Gastrocnemius medialis (tissue), 4 donors: ENCODE measurements at regions of chr18 and their contacts with region 1.

Region 1: GRCh38 chr18:9951022-9951859 is 37.4 kb downstream of the VAPA start:
- DNase-seq: no peak
- ATAC-seq: peak; percentile 43 to 71
- H3K4me3 ChIP-seq: no peak overlapping the region
- H3K27ac ChIP-seq: no peak overlapping the region
- H3K4me1 ChIP-seq: no peaks in the 10 kb centered on the region
- H3K27me3 ChIP-seq: no peaks in the 10 kb centered on the region
- CTCF ChIP-seq: peak in 4 of 5 experiments; percentile 27 to 55 (median 48)
- POLR2A ChIP-seq: no peak

Region 2: GRCh38 chr18:9708057-9708433 is 243.2 kb before region 1 on chr18 and contains the start of gene RAB31:
- in situ Hi-C with region 1: no loop called
- intact Hi-C with region 1: loop called (anchors 10 kb)
- DNase-seq: peak in 1 of 2 donors; percentile 54
- ATAC-seq: peak; percentile 69 to 72
- H3K4me3 ChIP-seq: peak within 1 kb of the TSS; percentile 64 to 85 (median 71)
- H3K27ac ChIP-seq: peak within 1 kb of the TSS; percentile 63 to 85 (median 72)
- H3K4me1 ChIP-seq: peaks cover 8 to 9% of the 10 kb centered on the region in 2 donors
- H3K27me3 ChIP-seq: peaks cover 18 to 21% (median 18%) of the 10 kb centered on the region in 3 donors
- CTCF ChIP-seq: no peak
- POLR2A ChIP-seq: peak; percentile 44 to 58
- total RNA-seq, gene RAB31: 3.2 to 7.1 (median 4.4) TPM

Region 3: GRCh38 chr18:9814431-9814830 is 136.8 kb before region 1 on chr18:
- in situ Hi-C with region 1: no loop called
- intact Hi-C with region 1: loop called (anchors 5 kb)
- DNase-seq: no peak
- ATAC-seq: no peak
- H3K4me3 ChIP-seq: no peak overlapping the region
- H3K27ac ChIP-seq: no peak overlapping the region
- H3K4me1 ChIP-seq: peaks cover 51 to 59% of the 10 kb centered on the region in 2 donors
- H3K27me3 ChIP-seq: no peaks in the 10 kb centered on the region
- CTCF ChIP-seq: no peak
- POLR2A ChIP-seq: no peak

Region 4: DNA sequence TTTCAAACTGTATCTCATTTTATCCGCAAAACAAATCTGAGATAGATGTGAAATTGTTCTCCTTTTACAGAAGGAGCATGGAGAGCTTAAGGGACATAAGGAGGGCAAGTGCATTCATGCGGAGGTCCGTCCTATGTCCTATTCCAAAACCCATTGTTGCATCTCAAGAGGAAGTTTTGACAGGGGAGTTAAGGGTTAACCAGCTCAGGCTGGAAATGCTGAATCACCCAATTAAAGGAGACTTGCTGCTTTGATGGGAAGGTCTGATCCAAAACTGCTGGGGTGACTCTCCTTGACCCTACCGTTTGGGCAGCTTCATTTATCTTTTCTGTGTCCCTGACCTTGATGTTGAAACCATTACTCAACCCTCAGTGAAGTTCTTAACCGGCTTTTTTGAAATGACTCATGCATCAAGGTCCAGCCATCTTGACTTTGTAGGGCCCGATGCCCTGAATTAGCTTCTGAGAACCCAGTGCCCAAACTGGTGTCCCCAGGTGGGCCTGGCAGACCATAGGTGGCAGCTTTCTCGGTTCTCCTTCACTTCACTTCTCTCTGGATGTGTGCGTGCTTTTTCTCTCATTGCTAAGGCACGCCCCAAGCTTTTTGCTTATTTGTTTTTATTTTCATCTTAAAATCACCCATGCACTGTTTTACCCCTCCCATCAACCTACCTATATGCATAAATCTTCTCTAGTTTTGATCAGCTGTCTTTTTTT is 81.4 kb before region 1 on chr18:
- in situ Hi-C with region 1: no loop called
- intact Hi-C with region 1: no loop called
- DNase-seq: no peak
- ATAC-seq: peak; percentile 52 to 62
- H3K4me3 ChIP-seq: no peak overlapping the region
- H3K27ac ChIP-seq: no peak overlapping the region
- H3K4me1 ChIP-seq: no peaks in the 10 kb centered on the region
- H3K27me3 ChIP-seq: no peaks in the 10 kb centered on the region
- CTCF ChIP-seq: no peak
- POLR2A ChIP-seq: no peak

Region 5: GRCh38 chr18:10499230-10499629 is 548.0 kb after region 1 on chr18:
- in situ Hi-C with region 1: no loop called
- intact Hi-C with region 1: no loop called
- DNase-seq: no peak
- ATAC-seq: no peak
- H3K4me3 ChIP-seq: no peak overlapping the region
- H3K27ac ChIP-seq: no peak overlapping the region
- H3K4me1 ChIP-seq: no peaks in the 10 kb centered on the region
- H3K27me3 ChIP-seq: no peaks in the 10 kb centered on the region
- CTCF ChIP-seq: no peak
- POLR2A ChIP-seq: no peak